ENCODE measurements at regions of chr7 and their contacts with region 1.

Region 1: DNA sequence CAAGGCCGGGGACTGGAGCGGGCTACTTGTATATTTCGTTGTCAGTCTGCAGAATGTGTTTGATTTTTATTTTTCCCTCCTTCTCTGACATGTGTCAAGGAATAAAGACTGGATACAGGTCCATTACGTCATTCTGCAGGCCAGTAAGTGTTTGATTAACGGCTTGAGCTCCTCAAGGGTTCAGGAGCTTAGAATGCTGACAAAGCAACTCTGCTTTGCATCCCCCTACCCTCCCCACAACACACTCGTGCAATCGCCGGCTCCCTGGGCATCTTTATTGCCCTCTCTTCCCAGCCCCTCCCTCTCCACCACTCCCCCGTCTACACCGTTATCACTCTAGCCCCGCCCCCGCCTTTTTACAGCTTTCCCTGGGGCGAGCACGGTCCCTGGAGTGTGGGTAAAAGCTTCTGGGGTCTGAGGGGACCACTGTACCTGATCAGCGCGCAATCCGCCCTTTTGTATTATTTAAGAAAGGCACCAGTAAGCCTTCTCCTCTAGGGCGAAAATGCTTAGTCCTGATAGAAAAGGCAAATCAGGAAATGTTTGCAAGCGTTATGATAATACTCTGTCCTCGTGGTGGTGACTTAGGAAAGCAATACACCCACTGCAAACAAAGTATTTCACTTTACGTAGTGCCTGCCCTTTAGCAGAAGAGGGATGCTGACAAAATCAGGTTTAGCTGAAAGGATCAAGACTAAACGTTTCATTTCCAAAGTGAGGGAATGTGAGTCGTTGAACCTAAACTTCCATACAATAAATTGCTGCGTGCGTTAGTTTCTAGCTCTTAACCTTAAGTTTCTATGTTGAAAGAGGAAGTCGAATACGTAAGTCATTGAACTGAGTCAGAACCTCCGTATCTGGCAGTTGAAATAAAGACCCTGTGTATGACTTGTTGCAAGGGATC is 1.4 kb upstream of the CREB5 start:
- H3K4me3 Mint-ChIP-seq: peak overlapping the region; percentile 75
- H3K27ac Mint-ChIP-seq: peak overlapping the region; percentile 92
- H3K4me1 Mint-ChIP-seq: peaks cover 35% of the 10 kb centered on the region
- H3K27me3 Mint-ChIP-seq: peaks cover 82% of the 10 kb centered on the region

Region 2: GRCh38 chr7:28509251-28510022 is 98.6 kb after region 1 on chr7:
- intact Hi-C with region 1: loop called (anchors 5 kb)
- H3K4me3 Mint-ChIP-seq: peak overlapping the region; percentile 55
- H3K27ac Mint-ChIP-seq: peak overlapping the region; percentile 97
- H3K4me1 Mint-ChIP-seq: peaks cover 50% of the 10 kb centered on the region
- H3K27me3 Mint-ChIP-seq: peaks cover 3% of the 10 kb centered on the region

Region 3: GRCh38 chr7:28608731-28609130 is 197.9 kb after region 1 on chr7:
- intact Hi-C with region 1: no loop called
- H3K4me3 Mint-ChIP-seq: no peak overlapping the region
- H3K27ac Mint-ChIP-seq: no peak overlapping the region
- H3K4me1 Mint-ChIP-seq: peaks cover 27% of the 10 kb centered on the region
- H3K27me3 Mint-ChIP-seq: peaks cover 18% of the 10 kb centered on the region

Measured in dendritic cell treated with granulocyte-macrophage colony-stimulating factor and Interleukin-4, amounts not matched to agents 40 ng/mL and 50 ng/mL, for 4 days (primary cell).